Activated CD8-positive, alpha-beta memory T cell treated with anti-CD3 and anti-CD28 coated beads, Interleukin-2, amount 10 ng/mL, durations not matched to agents 7 days and 5 days (primary cell): ENCODE measurements at regions of chr20 and their contacts with region 1.

Region 1: DNA sequence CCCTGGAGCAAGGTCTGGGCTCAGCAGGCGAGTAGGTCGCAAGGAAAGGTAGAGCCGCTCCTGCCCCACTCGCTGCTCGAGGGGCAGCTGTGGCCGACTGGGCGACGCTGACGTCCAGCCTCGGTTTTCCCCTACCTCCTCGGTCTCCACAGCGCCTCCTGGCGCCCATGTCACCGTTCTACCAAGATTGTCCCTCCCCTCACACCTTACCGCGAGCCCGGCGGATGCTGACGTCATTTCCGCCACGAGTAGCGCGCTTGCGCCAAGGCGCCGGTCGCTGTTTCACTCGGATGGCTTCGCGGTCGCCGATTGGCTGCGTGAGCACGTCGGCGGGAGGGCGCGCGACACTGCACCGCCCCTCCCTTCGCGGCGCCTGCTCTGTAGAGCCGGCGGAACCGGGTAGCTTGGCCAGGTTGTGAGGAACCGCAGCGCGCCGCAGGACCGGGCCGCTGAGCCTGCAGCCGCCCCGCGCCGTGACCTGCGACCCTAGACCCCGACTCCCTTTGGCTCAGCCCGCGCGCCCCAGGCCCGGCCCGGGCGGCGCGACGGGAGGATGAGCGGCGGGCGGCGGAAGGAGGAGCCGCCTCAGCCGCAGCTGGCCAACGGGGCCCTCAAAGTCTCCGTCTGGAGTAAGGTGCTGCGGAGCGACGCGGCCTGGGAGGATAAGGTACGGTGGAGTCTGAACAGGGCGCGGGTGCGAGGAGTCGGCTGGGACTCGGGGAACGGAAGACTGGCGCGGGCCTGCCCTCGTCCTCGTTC is at the start of gene RAB5IF:
- DNase-seq: peak; percentile 100
- ATAC-seq: peak; percentile 92
- H3K4me3 Mint-ChIP-seq: peak within 1 kb of the TSS; percentile 98
- H3K27ac Mint-ChIP-seq: peak within 1 kb of the TSS; percentile 96
- H3K4me1 Mint-ChIP-seq: peaks cover 27% of the 10 kb centered on the region
- H3K27me3 Mint-ChIP-seq: no peaks in the 10 kb centered on the region
- total RNA-seq, gene RAB5IF: 81.8 to 115 TPM

Region 2: DNA sequence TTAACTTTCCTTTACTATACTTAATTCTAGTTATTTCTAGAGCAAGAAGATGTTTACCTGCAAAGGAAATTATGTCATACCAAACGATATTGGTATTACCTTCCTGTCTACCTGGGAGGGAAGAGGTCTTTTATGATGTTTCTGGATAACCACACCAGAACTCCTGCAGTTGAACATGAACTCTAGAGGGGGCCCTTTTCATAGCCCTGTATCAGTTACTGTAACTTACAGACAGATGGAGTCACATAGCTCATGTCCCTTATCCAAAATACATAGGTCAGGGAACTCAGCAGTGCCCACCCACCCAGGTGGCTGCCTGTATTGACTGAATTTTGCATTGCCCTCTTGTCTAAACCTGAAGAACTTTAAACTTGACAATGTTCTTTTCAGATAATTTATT is 99.3 kb before region 1 on chr20:
- CTCF ChIA-PET with region 1: interaction called, 20 read pairs
- DNase-seq: no peak
- ATAC-seq: peak; percentile 70
- H3K4me3 Mint-ChIP-seq: no peak overlapping the region
- H3K27ac Mint-ChIP-seq: no peak overlapping the region
- H3K4me1 Mint-ChIP-seq: peaks cover 6% of the 10 kb centered on the region
- H3K27me3 Mint-ChIP-seq: no peaks in the 10 kb centered on the region

Region 3: DNA sequence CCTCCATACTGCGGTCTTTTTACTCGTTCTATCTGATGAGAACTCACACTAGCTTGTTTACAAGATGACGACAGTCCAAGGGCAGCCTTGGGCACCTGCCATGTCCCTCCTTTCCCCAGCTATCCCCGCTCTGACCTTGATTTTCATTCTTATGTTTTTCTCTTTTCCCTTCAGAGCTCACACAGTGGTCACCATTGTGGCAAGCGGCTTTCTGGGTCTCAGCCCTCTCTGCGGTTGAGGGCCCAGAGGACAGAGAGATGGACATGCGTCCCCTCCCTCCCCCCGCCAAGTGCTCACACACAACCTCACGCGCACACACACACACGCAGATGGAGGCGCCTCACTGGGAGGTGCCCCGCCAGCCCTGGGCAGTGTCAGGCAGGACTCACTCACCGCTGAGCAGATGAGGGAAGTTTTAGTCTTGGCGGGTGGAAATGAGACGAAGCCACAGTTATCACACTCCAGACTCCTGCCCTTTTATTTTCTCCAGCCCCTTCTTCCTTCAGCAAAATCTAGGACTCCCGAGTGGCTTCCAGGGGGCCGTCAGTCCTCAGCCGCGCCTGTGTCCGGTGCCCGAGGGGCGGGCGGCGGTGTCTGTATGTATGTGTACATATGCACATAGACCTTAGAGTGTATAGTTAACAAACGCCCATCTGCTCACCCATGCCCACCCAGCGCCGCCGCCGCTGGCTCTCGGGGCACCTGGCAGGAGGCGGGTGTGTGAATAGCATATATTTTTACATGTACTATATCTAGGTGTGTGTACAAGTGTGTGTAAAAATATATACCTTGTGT is 78.0 kb before region 1 on chr20:
- CTCF ChIA-PET with region 1: no interaction called
- DNase-seq: no peak
- ATAC-seq: no peak
- H3K4me3 Mint-ChIP-seq: no peak overlapping the region
- H3K27ac Mint-ChIP-seq: no peak overlapping the region
- H3K4me1 Mint-ChIP-seq: no peaks in the 10 kb centered on the region
- H3K27me3 Mint-ChIP-seq: no peaks in the 10 kb centered on the region

Region 4: GRCh38 chr20:36573103-36573794 is 32.3 kb before region 1 on chr20 and contains the start of gene TGIF2:
- CTCF ChIA-PET with region 1: interaction called, 54 read pairs
- DNase-seq: peak; percentile 92
- ATAC-seq: peak; percentile 81
- H3K4me3 Mint-ChIP-seq: peak within 1 kb of the TSS; percentile 85
- H3K27ac Mint-ChIP-seq: peak within 1 kb of the TSS; percentile 94
- H3K4me1 Mint-ChIP-seq: peaks cover 37% of the 10 kb centered on the region
- H3K27me3 Mint-ChIP-seq: no peaks in the 10 kb centered on the region
- total RNA-seq, gene TGIF2: 32.5 to 40.9 TPM

Region 5: GRCh38 chr20:36591854-36592641 is 13.5 kb before region 1 on chr20:
- CTCF ChIA-PET with region 1: interaction called, 56 read pairs
- DNase-seq: peak; percentile 76
- ATAC-seq: peak; percentile 53
- H3K4me3 Mint-ChIP-seq: peak overlapping the region; percentile 5
- H3K27ac Mint-ChIP-seq: peak overlapping the region; percentile 85
- H3K4me1 Mint-ChIP-seq: peaks cover 73% of the 10 kb centered on the region
- H3K27me3 Mint-ChIP-seq: no peaks in the 10 kb centered on the region

Region 6: DNA sequence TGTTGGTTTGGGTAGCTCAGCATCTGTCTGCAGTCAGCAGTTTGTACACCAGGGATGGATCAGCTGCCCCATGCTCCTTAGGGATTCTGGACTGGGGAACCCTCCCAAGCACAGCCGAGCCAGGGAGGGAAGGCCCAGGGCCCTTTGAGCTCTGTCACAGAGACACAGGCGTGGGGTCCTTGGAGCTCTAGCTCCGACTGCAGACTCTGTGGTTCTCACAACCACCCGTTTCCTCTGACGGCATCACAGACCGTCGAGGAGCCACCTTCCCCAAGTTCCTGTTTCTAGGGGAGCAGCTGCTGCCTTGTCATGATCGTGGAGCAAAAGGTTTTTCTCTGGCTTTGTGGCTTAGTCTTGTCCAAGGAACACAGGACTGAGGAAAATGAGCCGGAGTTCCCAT is 40.4 kb after region 1 on chr20 and contains the start of gene SLA2:
- CTCF ChIA-PET with region 1: interaction called, 14 read pairs
- DNase-seq: peak; percentile 91
- ATAC-seq: peak; percentile 76
- H3K4me3 Mint-ChIP-seq: peak within 1 kb of the TSS; percentile 96
- H3K27ac Mint-ChIP-seq: peak within 1 kb of the TSS; percentile 98
- H3K4me1 Mint-ChIP-seq: peaks cover 40% of the 10 kb centered on the region
- H3K27me3 Mint-ChIP-seq: no peaks in the 10 kb centered on the region
- total RNA-seq, gene SLA2: 109 to 140 TPM

Region 7: GRCh38 chr20:36875702-36876472 is 270.3 kb after region 1 on chr20 and contains the start of gene TLDC2:
- CTCF ChIA-PET with region 1: no interaction called
- DNase-seq: no peak
- ATAC-seq: no peak
- H3K4me3 Mint-ChIP-seq: no peak within 1 kb of the TSS
- H3K27ac Mint-ChIP-seq: no peak within 1 kb of the TSS
- H3K4me1 Mint-ChIP-seq: peaks cover 2% of the 10 kb centered on the region
- H3K27me3 Mint-ChIP-seq: no peaks in the 10 kb centered on the region
- total RNA-seq, gene TLDC2: not detected